B cell (primary cell): ENCODE measurements at regions of chr18 and their contacts with region 1.

Region 1: DNA sequence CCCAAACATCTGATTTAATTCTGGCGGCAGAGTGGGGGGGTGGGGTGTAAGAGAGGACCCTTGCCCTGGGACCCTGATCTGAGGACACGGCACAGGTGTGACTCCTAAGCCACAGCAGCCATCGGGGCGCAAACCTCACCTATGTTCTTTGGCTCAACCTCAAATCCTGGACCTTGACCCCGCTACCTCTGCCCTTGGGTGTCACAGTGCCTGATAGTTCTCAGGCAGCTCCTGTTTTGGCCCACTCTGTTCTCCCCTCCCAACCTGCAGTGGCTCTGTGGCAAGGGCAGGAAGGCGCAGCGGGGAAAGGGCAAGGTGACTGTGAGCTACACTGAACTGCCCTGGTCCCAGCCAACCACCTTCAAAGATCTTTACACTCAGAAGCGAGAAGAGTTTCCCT is 152.8 kb downstream of the L3MBTL4 start:
- DNase-seq: no peak
- ATAC-seq: no peak
- H3K4me3 ChIP-seq: no peak overlapping the region
- H3K4me3 Mint-ChIP-seq: no peak overlapping the region
- H3K27ac ChIP-seq: no peak overlapping the region
- H3K27ac Mint-ChIP-seq: no peak overlapping the region
- H3K4me1 ChIP-seq: no peaks in the 10 kb centered on the region
- H3K4me1 Mint-ChIP-seq: peaks cover 4% of the 10 kb centered on the region
- H3K27me3 ChIP-seq: no peaks in the 10 kb centered on the region
- H3K27me3 Mint-ChIP-seq: no peaks in the 10 kb centered on the region
- CTCF ChIP-seq: no peak

Region 2: DNA sequence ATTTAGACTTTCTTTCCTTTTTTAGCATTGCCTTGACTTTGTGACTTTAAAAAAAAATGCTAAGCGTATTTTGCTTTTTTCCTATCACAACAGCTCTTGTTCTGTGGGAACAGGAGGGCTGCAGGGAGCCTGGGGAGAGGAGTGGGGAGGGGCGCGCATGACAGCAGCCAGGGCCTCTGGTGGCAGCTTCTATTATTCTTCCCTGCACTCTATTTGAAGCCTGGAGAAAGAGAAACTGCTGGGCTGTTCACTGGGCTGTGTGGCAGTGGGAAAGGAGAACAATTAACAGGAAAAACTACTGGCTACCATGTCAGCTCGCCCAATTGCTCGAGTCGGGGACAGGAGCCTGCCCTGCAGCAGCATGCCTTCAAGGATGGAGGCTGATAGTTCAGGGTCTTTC is 847.4 kb before region 1 on chr18:
- CTCF ChIA-PET with region 1: no interaction called
- POLR2A ChIA-PET with region 1: no interaction called
- intact Hi-C with region 1: loop called (anchors 5 kb)
- DNase-seq: no peak
- ATAC-seq: no peak
- H3K4me3 ChIP-seq: no peak overlapping the region
- H3K4me3 Mint-ChIP-seq: no peak overlapping the region
- H3K27ac ChIP-seq: no peak overlapping the region
- H3K27ac Mint-ChIP-seq: no peak overlapping the region
- H3K4me1 ChIP-seq: no peaks in the 10 kb centered on the region
- H3K4me1 Mint-ChIP-seq: no peaks in the 10 kb centered on the region
- H3K27me3 ChIP-seq: peaks cover 0 to 2% (median 0%) of the 10 kb centered on the region in 4 experiments
- H3K27me3 Mint-ChIP-seq: peaks cover 21% of the 10 kb centered on the region
- CTCF ChIP-seq: no peak

Region 3: DNA sequence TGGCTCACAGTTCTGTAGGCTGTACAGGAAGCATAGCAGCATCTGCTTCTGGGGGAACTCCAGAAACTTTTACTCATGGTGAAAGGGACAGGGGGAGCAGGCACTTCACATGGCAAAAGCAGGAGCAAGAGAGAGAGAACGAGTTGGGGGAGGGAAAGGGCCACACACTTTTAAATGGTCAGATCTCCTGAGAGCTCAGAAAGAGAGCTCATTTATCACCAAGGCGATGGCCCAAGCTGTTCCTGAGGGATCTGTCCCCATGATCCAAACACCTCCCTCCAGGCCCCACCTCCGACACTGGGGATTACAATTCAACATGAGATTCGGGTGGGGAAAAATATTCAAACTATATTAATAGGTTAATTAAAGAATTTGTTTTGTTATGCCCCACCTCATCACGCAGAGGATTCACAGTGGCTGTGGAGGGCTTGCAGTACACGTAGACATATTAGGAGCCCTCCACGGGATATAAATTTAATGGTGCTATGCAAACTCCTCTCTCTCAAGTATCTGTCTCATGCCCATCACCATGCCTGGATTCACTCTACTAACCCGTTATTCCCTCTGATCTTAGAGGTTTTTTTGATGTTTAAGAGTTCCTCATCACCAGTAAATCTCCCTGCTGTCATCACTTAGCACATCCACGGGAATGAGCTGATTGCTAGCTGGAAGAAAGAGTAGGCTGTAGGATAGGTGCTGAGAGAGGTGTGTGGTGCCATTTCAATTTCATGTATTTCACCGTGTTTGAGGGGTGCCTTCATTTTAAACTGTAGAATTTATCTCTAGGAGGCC is 383.1 kb after region 1 on chr18:
- CTCF ChIA-PET with region 1: no interaction called
- POLR2A ChIA-PET with region 1: no interaction called
- intact Hi-C with region 1: no loop called
- DNase-seq: no peak
- ATAC-seq: no peak
- H3K4me3 ChIP-seq: no peak overlapping the region
- H3K4me3 Mint-ChIP-seq: no peak overlapping the region
- H3K27ac ChIP-seq: no peak overlapping the region
- H3K27ac Mint-ChIP-seq: no peak overlapping the region
- H3K4me1 ChIP-seq: no peaks in the 10 kb centered on the region
- H3K4me1 Mint-ChIP-seq: no peaks in the 10 kb centered on the region
- H3K27me3 ChIP-seq: no peaks in the 10 kb centered on the region
- H3K27me3 Mint-ChIP-seq: no peaks in the 10 kb centered on the region
- CTCF ChIP-seq: no peak